Activated CD4-positive, alpha-beta T cell treated with anti-CD3 and anti-CD28 coated beads for 36 hours (primary cell): ENCODE measurements at regions of chrX and their contacts with region 1.

Region 1: GRCh38 chrX:70592091-70592490 is 147.5 kb downstream of the DLG3 start:
- DNase-seq: peak; percentile 61
- ATAC-seq: peak; percentile 99
- H3K4me3 Mint-ChIP-seq: no peak overlapping the region
- H3K27ac Mint-ChIP-seq: peak overlapping the region; percentile 17
- H3K4me1 Mint-ChIP-seq: peaks cover 15% of the 10 kb centered on the region
- H3K27me3 Mint-ChIP-seq: no peaks in the 10 kb centered on the region

Region 2: GRCh38 chrX:70525733-70526132 is 66.4 kb before region 1 on chrX:
- CTCF ChIA-PET with region 1: no interaction called
- POLR2A ChIA-PET with region 1: no interaction called
- intact Hi-C with region 1: no loop called
- DNase-seq: no peak
- ATAC-seq: no peak
- H3K4me3 Mint-ChIP-seq: no peak overlapping the region
- H3K27ac Mint-ChIP-seq: no peak overlapping the region
- H3K4me1 Mint-ChIP-seq: peaks cover 5% of the 10 kb centered on the region
- H3K27me3 Mint-ChIP-seq: no peaks in the 10 kb centered on the region

Region 3: GRCh38 chrX:70554081-70554480 is 38.0 kb before region 1 on chrX:
- CTCF ChIA-PET with region 1: no interaction called
- POLR2A ChIA-PET with region 1: no interaction called
- intact Hi-C with region 1: loop called in 1 of 2 experiments (anchors 5 kb)
- DNase-seq: no peak
- ATAC-seq: no peak
- H3K4me3 Mint-ChIP-seq: no peak overlapping the region
- H3K27ac Mint-ChIP-seq: peak overlapping the region; percentile 6
- H3K4me1 Mint-ChIP-seq: peaks cover 10% of the 10 kb centered on the region
- H3K27me3 Mint-ChIP-seq: peaks cover 2% of the 10 kb centered on the region

Region 4: GRCh38 chrX:70656304-70656703 is 64.2 kb after region 1 on chrX:
- CTCF ChIA-PET with region 1: no interaction called
- POLR2A ChIA-PET with region 1: no interaction called
- intact Hi-C with region 1: loop called (anchors 5 to 10 kb)
- DNase-seq: peak; percentile 6
- ATAC-seq: peak; percentile 74
- H3K4me3 Mint-ChIP-seq: no peak overlapping the region
- H3K27ac Mint-ChIP-seq: peak overlapping the region; percentile 76
- H3K4me1 Mint-ChIP-seq: peaks cover 7% of the 10 kb centered on the region
- H3K27me3 Mint-ChIP-seq: no peaks in the 10 kb centered on the region

Region 5: GRCh38 chrX:70672326-70672725 is 80.2 kb after region 1 on chrX:
- CTCF ChIA-PET with region 1: interaction called, 3 read pairs
- POLR2A ChIA-PET with region 1: no interaction called
- intact Hi-C with region 1: loop called in 1 of 2 experiments (anchors 5 kb)
- DNase-seq: no peak
- ATAC-seq: peak; percentile 51
- H3K4me3 Mint-ChIP-seq: no peak overlapping the region
- H3K27ac Mint-ChIP-seq: no peak overlapping the region
- H3K4me1 Mint-ChIP-seq: peaks cover 21% of the 10 kb centered on the region
- H3K27me3 Mint-ChIP-seq: no peaks in the 10 kb centered on the region